Ovary (tissue), 10 donors: ENCODE measurements at regions of chr22 and their contacts with region 1.

Region 1: GRCh38 chr22:46219636-46220035 is 30.5 kb downstream of the CDPF1 start:
- DNase-seq: no peak
- H3K4me3 ChIP-seq: no peak overlapping the region
- H3K27ac ChIP-seq: no peak overlapping the region
- H3K4me1 ChIP-seq: no peaks in the 10 kb centered on the region
- H3K27me3 ChIP-seq: no peaks in the 10 kb centered on the region
- CTCF ChIP-seq: no peak
- EP300 ChIP-seq: no peak
- POLR2A ChIP-seq: no peak

Region 2: DNA sequence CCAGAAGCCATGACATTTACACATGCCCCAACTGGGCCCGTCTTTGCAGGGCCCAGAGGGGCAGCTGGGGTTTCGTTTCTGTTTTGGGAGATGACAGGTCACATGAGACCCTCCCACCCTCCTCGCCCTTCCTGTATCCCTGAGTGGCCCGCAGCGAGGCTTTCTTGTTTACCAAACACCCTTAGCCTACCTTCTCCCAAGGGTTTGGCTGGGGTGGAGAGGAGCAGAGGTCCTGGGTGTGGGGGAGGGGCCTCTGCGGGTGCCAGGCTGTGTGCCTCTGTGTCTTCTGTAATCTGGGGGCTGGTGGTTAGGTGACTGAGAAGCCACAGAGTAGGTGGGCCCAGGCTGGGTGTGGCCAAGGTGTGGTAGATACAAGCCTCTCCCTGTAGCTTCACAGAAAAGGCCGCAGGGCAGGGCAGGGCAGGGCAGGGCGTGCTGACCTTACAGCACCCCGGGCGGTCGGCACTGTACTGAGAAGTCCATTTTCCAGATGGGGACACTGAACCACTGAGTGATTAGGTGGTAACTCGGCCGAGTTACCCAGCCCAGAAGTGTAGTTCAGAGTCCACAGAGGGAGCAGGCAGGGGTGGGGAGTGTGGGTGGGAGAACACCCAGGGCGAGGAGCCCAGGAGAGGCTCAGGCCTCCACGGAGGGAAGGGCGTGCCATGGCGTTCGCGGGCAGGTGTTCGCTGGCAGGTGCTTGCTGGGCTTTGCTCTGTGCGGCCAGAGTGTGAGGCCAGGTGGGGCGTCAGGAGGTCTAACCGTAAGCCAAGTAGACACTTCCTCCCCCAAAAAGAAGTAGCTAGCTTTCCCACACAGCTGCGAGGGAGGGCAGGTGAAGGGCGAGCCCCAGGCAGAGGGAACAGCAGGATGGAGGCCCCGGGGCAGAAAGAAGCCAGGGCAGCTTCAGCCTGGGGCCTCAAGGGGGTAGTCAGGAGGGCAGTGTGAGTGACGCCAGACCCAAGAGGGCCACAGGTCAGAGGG is 1508.9 kb before region 1 on chr22:
- intact Hi-C with region 1: no loop called
- DNase-seq: no peak
- H3K4me3 ChIP-seq: no peak overlapping the region
- H3K27ac ChIP-seq: no peak overlapping the region
- H3K4me1 ChIP-seq: peaks cover 1% of the 10 kb centered on the region
- H3K27me3 ChIP-seq: no peaks in the 10 kb centered on the region
- CTCF ChIP-seq: no peak
- EP300 ChIP-seq: no peak
- POLR2A ChIP-seq: no peak

Region 3: GRCh38 chr22:46159777-46160176 is 59.9 kb before region 1 on chr22:
- intact Hi-C with region 1: loop called in 1 of 4 experiments (anchors 10 kb)
- DNase-seq: peak in 1 of 5 donors; percentile 13
- H3K4me3 ChIP-seq: no peak overlapping the region
- H3K27ac ChIP-seq: no peak overlapping the region
- H3K4me1 ChIP-seq: peaks cover 2% of the 10 kb centered on the region
- H3K27me3 ChIP-seq: no peaks in the 10 kb centered on the region
- CTCF ChIP-seq: no peak
- EP300 ChIP-seq: no peak
- POLR2A ChIP-seq: no peak